Activated T-helper 2 cell treated with anti-CD3 and anti-CD28 coated beads, Interferon-gamma antibody, Interleukin-2, Interleukin-4, amounts not matched to agents 10 μg/mL and 5 μg/mL and 100 μg/mL, durations not matched to agents 14 hours and 24 hours and 36 hours (primary cell): ENCODE measurements at regions of chr12 and their contacts with region 1.

Region 1: GRCh38 chr12:62813031-62813829 is 121.7 kb downstream of the PPM1H start:
- DNase-seq: peak; percentile 10
- H3K4me3 Mint-ChIP-seq: no peak overlapping the region
- H3K27ac Mint-ChIP-seq: no peak overlapping the region
- H3K4me1 Mint-ChIP-seq: peaks cover 20% of the 10 kb centered on the region
- H3K27me3 Mint-ChIP-seq: peaks cover 28% of the 10 kb centered on the region

Region 2: DNA sequence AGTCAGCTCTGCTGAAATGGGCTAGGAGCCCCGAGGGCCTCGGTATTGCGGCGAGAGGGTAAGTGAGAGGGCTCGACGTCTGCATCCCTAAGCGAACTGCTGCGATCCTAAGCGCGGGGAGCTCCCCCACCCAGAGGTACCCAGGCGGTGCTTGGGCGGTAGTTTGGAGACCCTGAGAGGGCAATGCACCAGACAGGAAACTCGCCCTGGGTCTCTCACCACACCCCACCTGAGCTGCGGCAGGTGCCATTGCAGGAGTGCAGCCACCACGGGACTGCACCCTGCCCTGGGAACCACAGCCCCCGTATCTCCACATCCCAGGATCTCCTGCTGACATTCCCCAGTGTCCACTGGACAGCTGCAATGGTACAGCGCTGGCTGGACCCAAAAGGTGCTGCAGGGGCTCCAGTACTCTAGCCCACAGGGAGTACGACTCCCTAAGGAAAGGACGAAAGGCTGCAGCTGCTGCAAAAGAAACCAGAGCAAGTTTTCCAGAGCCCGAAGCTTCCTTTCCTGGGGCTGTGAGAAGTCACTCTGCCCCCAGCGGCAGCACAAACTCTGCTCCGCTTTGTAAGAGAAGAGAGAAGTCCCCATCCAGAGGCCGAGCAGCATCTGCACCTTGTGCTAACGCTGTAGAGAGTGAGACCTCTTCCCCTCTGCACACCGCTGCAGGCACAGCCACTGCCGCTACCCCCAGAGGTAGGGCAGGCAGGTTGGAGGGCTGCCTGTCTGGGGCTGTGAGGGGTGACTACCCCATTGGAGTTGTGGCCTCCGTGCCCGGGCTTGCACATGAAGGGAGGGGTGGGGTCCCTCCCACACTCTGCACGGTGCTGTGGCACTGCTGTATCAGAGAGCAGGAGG is 377.7 kb before region 1 on chr12:
- intact Hi-C with region 1: loop called (anchors 5 kb)
- DNase-seq: peak; percentile 18
- H3K4me3 Mint-ChIP-seq: peak overlapping the region; percentile 72
- H3K27ac Mint-ChIP-seq: no peak overlapping the region
- H3K4me1 Mint-ChIP-seq: peaks cover 19% of the 10 kb centered on the region
- H3K27me3 Mint-ChIP-seq: peaks cover 52% of the 10 kb centered on the region

Region 3: DNA sequence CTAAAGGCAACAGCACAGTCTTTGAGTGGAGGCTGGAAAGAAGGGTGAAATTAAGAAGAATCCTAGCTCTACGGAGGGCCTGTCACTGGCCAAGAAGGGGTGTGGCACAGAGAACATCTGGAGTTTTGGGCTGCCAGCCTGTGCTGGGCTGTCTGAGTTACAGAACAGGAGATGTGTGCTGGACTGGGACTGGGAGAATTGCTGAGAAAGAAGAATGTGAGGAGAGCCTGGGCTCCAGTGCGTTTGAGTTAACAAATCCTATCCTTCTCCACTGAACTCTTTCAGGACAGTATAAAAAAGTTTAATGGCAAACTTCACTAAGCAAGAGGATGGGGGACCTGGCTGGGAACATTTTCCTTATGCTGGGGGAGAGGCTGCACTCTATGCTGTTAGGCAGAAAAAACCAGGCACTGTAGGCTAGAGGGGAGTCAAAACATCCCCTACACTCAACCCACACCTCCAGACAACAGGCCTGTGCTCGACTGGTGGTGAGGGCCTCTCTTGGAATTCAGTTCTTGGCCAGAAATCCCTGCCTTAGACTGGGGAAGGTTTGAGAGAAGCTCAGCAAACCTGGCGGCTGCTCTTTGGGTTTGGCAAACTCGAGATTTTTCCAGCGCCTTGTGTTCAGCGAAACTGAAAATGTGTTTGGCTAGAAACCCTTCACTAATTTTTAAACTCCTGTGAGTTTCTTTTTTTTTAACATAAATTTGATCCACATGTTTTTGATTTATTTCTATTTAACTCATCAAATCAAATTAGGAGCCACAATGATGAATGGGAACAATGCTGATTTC is 129.3 kb before region 1 on chr12:
- intact Hi-C with region 1: no loop called
- DNase-seq: no peak
- H3K4me3 Mint-ChIP-seq: no peak overlapping the region
- H3K27ac Mint-ChIP-seq: no peak overlapping the region
- H3K4me1 Mint-ChIP-seq: no peaks in the 10 kb centered on the region
- H3K27me3 Mint-ChIP-seq: peaks cover 14% of the 10 kb centered on the region

Region 4: GRCh38 chr12:62799126-62799736 is 14.0 kb before region 1 on chr12:
- intact Hi-C with region 1: no loop called
- DNase-seq: peak; percentile 16
- H3K4me3 Mint-ChIP-seq: no peak overlapping the region
- H3K27ac Mint-ChIP-seq: no peak overlapping the region
- H3K4me1 Mint-ChIP-seq: peaks cover 3% of the 10 kb centered on the region
- H3K27me3 Mint-ChIP-seq: peaks cover 31% of the 10 kb centered on the region

Region 5: GRCh38 chr12:62848421-62848820 is 35.2 kb after region 1 on chr12:
- intact Hi-C with region 1: no loop called
- DNase-seq: no peak
- H3K4me3 Mint-ChIP-seq: no peak overlapping the region
- H3K27ac Mint-ChIP-seq: no peak overlapping the region
- H3K4me1 Mint-ChIP-seq: no peaks in the 10 kb centered on the region
- H3K27me3 Mint-ChIP-seq: peaks cover 7% of the 10 kb centered on the region

Region 6: DNA sequence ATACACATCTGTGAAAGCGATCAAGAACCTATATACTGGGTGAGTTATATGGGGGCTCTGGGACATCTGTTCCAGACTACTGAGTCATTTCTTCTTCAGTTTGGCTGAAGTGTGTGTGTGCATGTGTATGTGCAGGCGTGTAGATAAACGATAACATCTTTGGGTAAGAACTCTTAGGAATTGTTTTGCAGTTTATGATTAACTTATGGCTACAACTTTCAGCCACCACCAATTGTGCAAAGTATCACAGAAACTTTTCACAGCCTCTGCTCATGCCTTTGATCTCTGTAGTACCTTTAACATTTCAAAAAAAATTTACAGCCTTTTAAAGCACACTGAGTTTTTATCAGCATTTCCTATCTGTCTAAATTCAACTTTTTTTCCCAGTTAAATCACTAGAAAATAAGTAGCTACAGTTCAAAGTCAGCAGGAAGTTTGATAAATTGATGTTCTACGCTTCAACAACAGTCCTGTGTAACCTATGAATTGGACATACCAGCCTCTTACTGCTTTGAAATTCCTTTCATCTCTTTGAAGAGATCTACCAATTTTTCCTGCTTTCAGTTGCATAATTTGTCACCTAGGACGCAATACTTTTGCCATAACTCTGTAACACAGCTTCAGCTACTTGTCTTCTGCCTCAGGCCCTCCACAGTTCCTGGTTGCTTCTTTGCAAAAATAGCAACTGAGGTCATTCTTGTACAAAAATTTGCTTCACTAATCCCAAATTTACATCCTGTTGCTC is 78.7 kb after region 1 on chr12:
- intact Hi-C with region 1: loop called (anchors 2 kb)
- DNase-seq: no peak
- H3K4me3 Mint-ChIP-seq: no peak overlapping the region
- H3K27ac Mint-ChIP-seq: no peak overlapping the region
- H3K4me1 Mint-ChIP-seq: peaks cover 13% of the 10 kb centered on the region
- H3K27me3 Mint-ChIP-seq: peaks cover 3% of the 10 kb centered on the region

Region 7: GRCh38 chr12:62934799-62935674 is 121.8 kb after region 1 on chr12 and contains the start of gene PPM1H:
- intact Hi-C with region 1: loop called (anchors 10 kb)
- DNase-seq: peak; percentile 15
- H3K4me3 Mint-ChIP-seq: peak within 1 kb of the TSS; percentile 83
- H3K27ac Mint-ChIP-seq: no peak within 1 kb of the TSS
- H3K4me1 Mint-ChIP-seq: peaks cover 6% of the 10 kb centered on the region
- H3K27me3 Mint-ChIP-seq: peaks cover 36% of the 10 kb centered on the region
- total RNA-seq, gene PPM1H: 0.11 TPM in 1 of 2 replicates, not detected in the other